OCI-LY7 (cell line): ENCODE measurements at regions of chr9 and their contacts with region 1.

Region 1: GRCh38 chr9:114291064-114291474 is 31.8 kb upstream of the ORM1 start:
- DNase-seq: peak; percentile 61
- H3K4me3 ChIP-seq: no peak overlapping the region
- H3K27ac ChIP-seq: no peak overlapping the region
- H3K4me1 ChIP-seq: no peaks in the 10 kb centered on the region
- CTCF ChIP-seq: peak; percentile 92

Region 2: GRCh38 chr9:114082017-114082762 is 208.9 kb before region 1 on chr9:
- CTCF ChIA-PET with region 1: interaction called, 4 read pairs
- POLR2A ChIA-PET with region 1: no interaction called
- intact Hi-C with region 1: loop called (anchors 1 kb)
- DNase-seq: peak; percentile 78
- H3K4me3 ChIP-seq: no peak overlapping the region
- H3K27ac ChIP-seq: no peak overlapping the region
- H3K4me1 ChIP-seq: no peaks in the 10 kb centered on the region
- CTCF ChIP-seq: peak; percentile 90

Region 3: GRCh38 chr9:114108016-114108833 is 182.8 kb before region 1 on chr9:
- CTCF ChIA-PET with region 1: interaction called, 5 read pairs
- POLR2A ChIA-PET with region 1: no interaction called
- intact Hi-C with region 1: loop called (anchors 1 kb)
- DNase-seq: peak; percentile 51
- H3K4me3 ChIP-seq: no peak overlapping the region
- H3K27ac ChIP-seq: no peak overlapping the region
- H3K4me1 ChIP-seq: no peaks in the 10 kb centered on the region
- CTCF ChIP-seq: peak; percentile 83

Region 4: DNA sequence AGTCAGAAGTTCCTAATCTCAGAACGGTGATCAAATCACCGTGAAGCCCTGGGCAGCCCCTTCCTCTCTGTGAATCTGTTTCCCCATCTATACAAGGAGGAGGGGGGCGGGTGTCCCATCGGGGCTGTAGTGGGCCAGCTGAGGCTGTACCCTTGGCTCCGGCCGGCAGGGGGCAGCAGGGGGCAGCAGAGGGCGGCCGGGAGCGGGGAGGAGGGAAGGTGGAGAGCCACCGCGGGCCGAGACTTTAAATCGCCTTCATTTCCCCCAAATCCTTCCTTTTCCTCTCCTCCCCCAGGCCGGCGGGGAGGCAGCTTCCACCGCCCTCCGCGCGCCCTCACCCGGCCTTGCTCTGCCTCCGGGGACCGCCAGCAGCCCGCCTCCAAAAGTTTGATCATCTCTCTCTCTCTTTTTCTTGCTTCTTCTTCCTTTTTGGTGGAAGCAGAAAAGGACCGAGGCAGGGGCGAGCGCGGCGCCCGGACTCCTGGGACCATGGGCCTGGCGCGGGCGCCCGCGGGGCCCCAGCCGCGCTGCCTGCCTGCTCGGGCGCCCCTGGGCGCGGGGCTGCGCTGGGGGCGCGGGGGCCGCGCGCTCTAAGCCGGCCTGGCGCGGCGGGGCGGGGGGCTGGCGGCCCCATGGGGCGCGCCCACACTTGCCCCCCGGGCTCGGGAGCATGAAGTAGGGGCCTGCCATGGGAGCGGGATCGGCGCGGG is 135.7 kb before region 1 on chr9 and contains the start of gene COL27A1:
- CTCF ChIA-PET with region 1: no interaction called
- POLR2A ChIA-PET with region 1: no interaction called
- intact Hi-C with region 1: loop called (anchors 5 kb)
- DNase-seq: peak; percentile 51
- H3K4me3 ChIP-seq: no peak within 1 kb of the TSS
- H3K27ac ChIP-seq: no peak within 1 kb of the TSS
- H3K4me1 ChIP-seq: no peaks in the 10 kb centered on the region
- CTCF ChIP-seq: peak; percentile 83
- total RNA-seq, gene COL27A1: not detected in 2 replicates

Region 5: DNA sequence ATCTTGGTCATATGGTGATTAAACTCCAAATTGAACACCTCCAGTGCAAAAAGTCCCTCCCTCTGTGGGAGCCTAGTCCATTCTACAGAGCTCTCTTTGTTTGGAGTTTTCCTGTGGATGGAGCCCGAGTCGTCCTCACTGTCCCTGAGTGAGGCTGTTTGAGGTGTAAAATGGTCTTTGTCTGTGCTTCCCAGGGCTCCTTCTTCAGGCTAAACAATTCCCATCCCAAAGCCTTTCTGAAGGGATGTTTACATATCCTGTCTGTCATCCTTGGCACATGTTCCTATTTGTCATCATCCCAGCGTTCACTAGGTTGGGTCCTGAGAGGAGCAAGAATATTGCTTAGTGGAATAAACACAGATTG is 66.8 kb before region 1 on chr9:
- CTCF ChIA-PET with region 1: no interaction called
- POLR2A ChIA-PET with region 1: no interaction called
- intact Hi-C with region 1: no loop called
- DNase-seq: no peak
- H3K4me3 ChIP-seq: no peak overlapping the region
- H3K27ac ChIP-seq: no peak overlapping the region
- H3K4me1 ChIP-seq: no peaks in the 10 kb centered on the region
- CTCF ChIP-seq: no peak

Region 6: GRCh38 chr9:114238891-114239875 is 51.9 kb before region 1 on chr9:
- CTCF ChIA-PET with region 1: no interaction called
- POLR2A ChIA-PET with region 1: no interaction called
- intact Hi-C with region 1: loop called (anchors 2 kb)
- DNase-seq: peak; percentile 11
- H3K4me3 ChIP-seq: no peak overlapping the region
- H3K27ac ChIP-seq: no peak overlapping the region
- H3K4me1 ChIP-seq: no peaks in the 10 kb centered on the region
- CTCF ChIP-seq: peak; percentile 45; the same call in 1 of the 2 replicates